Right ventricle myocardium superior (tissue), 1 donor: ENCODE measurements at regions of chr17 and their contacts with region 1.

Region 1: DNA sequence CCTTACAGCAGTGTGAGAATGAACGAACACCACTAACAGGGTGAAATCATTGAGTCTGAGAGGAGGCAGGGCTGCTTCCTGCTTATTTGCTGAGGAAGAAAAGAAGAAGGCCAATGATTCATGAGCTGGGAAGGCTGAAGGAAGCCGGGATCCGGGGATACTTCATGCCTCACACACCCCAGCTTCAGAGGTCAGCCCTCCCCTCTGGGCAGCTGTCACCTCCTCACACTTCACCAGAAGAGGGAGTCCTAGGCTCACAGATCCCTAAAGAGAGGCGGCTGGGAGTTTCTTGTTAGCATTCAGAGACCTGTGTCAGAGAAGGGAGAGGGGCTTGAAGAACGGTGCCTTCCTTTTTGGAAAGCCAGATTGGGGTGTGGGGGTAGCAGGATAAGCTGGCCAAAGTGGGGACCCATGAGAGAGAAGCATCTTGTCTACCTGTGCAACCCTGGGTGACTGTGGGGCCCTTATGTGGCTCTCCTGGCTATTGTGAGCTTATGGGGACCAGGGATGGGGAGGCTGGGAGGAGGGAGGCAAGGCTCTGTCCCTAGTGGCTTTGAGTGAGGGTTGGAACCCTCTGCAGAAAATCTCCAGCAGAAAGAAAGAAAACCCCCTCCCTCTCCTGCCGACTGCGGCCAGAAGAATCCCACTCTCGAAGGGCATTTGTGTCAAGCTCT is 94.6 kb downstream of the RGS9 start:
- DNase-seq: no peak
- ATAC-seq: peak; percentile 85

Region 2: GRCh38 chr17:66165513-66166123 is 933.8 kb after region 1 on chr17:
- intact Hi-C with region 1: loop called (anchors 5 kb)
- DNase-seq: no peak
- ATAC-seq: no peak